Common myeloid progenitor, CD34-positive (primary cell): ENCODE measurements at regions of chr12 and their contacts with region 1.

Region 1: DNA sequence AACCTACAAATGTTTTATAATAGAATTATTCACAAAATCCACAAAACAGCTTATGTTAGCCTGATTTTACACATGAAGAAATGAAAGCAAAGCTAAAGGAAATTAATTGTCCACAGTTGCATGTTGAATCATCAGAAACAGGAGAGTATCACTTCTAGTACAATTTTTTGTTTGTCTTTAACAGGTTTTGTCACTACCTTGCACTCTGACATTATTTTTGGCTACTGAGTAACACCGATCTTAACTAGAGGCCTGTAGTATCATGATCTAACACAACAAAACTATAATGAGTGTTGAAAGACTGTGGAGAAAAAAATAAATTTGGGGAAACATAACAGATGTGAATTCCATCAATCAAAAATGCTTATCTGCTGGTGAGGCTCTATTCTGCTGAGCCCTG is 60.1 kb downstream of the TAOK3 start:
- DNase-seq: peak in 1 of 3 donors; percentile 45
- H3K4me3 ChIP-seq: peak overlapping the region in 2 of 7 experiments; percentile 12 to 37
- H3K27ac ChIP-seq: peak overlapping the region; percentile 51 to 68
- H3K4me1 ChIP-seq: peaks cover 29 to 76% (median 55%) of the 10 kb centered on the region in 4 experiments
- H3K27me3 ChIP-seq: no peaks in the 10 kb centered on the region

Region 2: DNA sequence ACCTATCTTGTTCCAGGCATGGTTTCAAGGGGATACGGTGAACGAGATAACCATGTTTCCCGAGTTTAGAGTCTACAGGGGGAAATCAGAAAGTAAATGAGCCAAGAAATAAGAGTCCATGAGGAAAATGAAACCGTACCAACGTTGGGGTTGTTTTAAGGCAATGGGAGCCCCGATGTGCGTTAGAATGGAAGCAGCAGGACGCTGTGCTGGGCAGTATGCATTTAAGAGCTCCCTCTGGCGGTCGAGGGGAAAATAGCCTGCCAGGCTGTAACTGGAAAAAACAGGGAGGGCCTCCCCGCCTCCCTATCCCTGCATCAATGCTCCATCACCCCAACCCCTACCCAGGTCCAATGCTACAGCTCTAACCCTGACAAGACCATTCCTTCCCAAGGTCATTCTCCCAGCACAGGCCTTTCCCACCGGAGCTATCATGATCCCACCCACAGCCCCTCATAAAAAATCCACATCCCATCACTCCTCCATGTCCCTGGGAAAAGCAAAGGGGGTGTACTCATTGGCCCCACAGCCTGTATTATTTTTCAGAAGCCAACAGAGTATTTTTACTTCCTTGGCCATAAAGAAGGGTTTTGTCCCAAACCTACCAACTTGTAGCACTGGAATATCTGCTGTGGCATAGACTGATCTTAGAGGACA is 724.8 kb before region 1 on chr12:
- CTCF ChIA-PET with region 1: no interaction called
- POLR2A ChIA-PET with region 1: no interaction called
- DNase-seq: peak; percentile 12 to 40 (median 33)
- H3K4me3 ChIP-seq: no peak overlapping the region
- H3K27ac ChIP-seq: no peak overlapping the region
- H3K4me1 ChIP-seq: no peaks in the 10 kb centered on the region
- H3K27me3 ChIP-seq: peaks cover 2 to 29% (median 21%) of the 10 kb centered on the region in 5 experiments

Region 3: DNA sequence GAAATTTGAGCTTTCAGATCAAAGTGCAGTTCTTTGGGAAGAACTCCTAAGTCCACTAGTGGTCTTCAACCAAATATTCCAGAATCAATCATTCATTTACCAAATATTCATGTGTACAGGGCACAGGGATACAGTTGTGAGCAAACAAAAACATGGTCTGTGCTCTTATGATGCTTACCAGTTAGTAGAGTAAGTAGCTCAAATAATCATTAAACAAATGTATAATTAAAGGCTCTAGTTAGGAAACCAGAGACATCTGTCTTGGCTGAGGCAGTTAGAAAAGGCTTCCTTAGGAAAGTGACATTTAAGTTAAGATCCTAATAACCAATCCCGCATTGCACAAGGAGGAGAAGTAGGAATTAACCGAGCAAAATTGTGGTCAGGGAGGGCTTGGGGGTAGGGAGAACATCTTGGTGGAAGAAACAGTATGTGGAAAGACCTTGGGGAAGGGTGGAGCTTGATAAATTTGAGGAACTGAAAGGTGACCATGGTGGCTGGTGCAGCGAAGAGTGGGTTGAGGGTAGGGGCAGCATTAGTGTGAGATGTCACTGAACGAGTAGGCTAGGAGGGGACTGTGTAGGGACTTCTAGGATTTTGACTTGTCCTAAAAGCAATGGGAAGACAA is 136.6 kb before region 1 on chr12:
- CTCF ChIA-PET with region 1: no interaction called
- POLR2A ChIA-PET with region 1: no interaction called
- DNase-seq: no peak
- H3K4me3 ChIP-seq: no peak overlapping the region
- H3K27ac ChIP-seq: no peak overlapping the region
- H3K4me1 ChIP-seq: no peaks in the 10 kb centered on the region
- H3K27me3 ChIP-seq: no peaks in the 10 kb centered on the region

Region 4: GRCh38 chr12:118302066-118302465 is 10.5 kb before region 1 on chr12:
- CTCF ChIA-PET with region 1: interaction called, 10 read pairs
- POLR2A ChIA-PET with region 1: interaction called, 3 read pairs
- DNase-seq: no peak
- H3K4me3 ChIP-seq: peak overlapping the region in 1 of 7 experiments; percentile 1
- H3K27ac ChIP-seq: no peak overlapping the region
- H3K4me1 ChIP-seq: peaks cover 18 to 53% (median 35%) of the 10 kb centered on the region in 4 experiments
- H3K27me3 ChIP-seq: no peaks in the 10 kb centered on the region